PC-9 (cell line): ENCODE measurements at regions of chr6 and their contacts with region 1.

Region 1: DNA sequence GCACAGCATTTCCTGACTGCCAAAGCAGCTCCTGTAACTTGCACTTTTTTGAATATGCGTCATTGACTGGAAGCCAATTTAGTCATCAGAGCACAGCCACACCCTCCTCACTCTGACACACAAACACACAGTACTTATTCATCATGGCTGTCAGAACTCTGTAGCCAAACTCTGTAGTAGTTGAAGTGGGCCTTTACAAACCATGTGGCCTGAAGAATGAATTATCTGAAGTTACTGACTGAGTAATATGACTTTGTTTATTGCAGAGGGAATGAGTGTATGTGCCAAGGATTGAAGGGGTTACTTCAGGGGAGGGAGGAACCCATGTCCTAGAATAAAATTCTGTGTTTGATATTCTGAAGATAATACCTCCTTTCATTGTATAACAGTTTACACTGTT is 102.7 kb downstream of the FIG4 start:
- DNase-seq: peak; percentile 31 to 90
- H3K4me3 ChIP-seq: no peak overlapping the region
- H3K27ac ChIP-seq: peak overlapping the region; percentile 84
- H3K4me1 ChIP-seq: peaks cover 50% of the 10 kb centered on the region
- H3K27me3 ChIP-seq: no peaks in the 10 kb centered on the region
- CTCF ChIP-seq: no peak

Region 2: DNA sequence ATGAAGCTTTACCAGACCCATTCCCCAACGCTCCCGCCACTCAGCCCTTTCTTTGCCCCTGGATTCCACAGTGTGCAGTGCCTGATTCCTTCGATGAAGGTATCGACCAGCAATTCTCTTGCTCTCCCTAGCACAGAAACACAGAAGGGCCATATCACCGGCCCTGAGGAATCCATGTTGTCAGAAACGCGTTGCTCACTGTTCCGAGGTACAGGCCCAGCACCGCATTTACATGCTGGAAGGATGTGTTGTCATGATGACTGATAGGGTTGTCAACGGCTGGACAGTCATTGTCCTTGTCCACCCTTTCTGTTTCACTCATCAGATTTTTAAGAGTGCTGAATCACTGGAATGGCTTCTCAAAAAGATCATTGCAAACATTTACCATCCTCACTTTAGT is 127.1 kb after region 1 on chr6:
- CTCF ChIA-PET with region 1: no interaction called
- POLR2A ChIA-PET with region 1: interaction called, 10 read pairs
- intact Hi-C with region 1: no loop called
- DNase-seq: no peak
- H3K4me3 ChIP-seq: no peak overlapping the region
- H3K27ac ChIP-seq: no peak overlapping the region
- H3K4me1 ChIP-seq: no peaks in the 10 kb centered on the region
- H3K27me3 ChIP-seq: no peaks in the 10 kb centered on the region
- CTCF ChIP-seq: no peak